Mammary epithelial cell (primary cell): ENCODE measurements at regions of chr4 and their contacts with region 1.

Region 1: GRCh38 chr4:144141493-144141892 is 975 bp upstream of the GYPA start:
- DNase-seq: no peak
- H3K4me3 ChIP-seq: no peak overlapping the region
- H3K27ac ChIP-seq: no peak overlapping the region
- H3K4me1 ChIP-seq: no peaks in the 10 kb centered on the region
- H3K27me3 ChIP-seq: no peaks in the 10 kb centered on the region
- CTCF ChIP-seq: no peak

Region 2: GRCh38 chr4:143773998-143774895 is 367.2 kb before region 1 on chr4:
- CTCF ChIA-PET with region 1: no interaction called
- dilution Hi-C with region 1: no loop called
- in situ Hi-C with region 1: no loop called
- intact Hi-C with region 1: loop called (anchors 1 kb)
- DNase-seq: peak; percentile 48
- H3K4me3 ChIP-seq: no peak overlapping the region
- H3K27ac ChIP-seq: no peak overlapping the region
- H3K4me1 ChIP-seq: no peaks in the 10 kb centered on the region
- H3K27me3 ChIP-seq: peaks cover 1% of the 10 kb centered on the region
- CTCF ChIP-seq: peak; percentile 78 to 95